AG04449 (cell line): ENCODE measurements at regions of chr10 and their contacts with region 1.

Region 1: DNA sequence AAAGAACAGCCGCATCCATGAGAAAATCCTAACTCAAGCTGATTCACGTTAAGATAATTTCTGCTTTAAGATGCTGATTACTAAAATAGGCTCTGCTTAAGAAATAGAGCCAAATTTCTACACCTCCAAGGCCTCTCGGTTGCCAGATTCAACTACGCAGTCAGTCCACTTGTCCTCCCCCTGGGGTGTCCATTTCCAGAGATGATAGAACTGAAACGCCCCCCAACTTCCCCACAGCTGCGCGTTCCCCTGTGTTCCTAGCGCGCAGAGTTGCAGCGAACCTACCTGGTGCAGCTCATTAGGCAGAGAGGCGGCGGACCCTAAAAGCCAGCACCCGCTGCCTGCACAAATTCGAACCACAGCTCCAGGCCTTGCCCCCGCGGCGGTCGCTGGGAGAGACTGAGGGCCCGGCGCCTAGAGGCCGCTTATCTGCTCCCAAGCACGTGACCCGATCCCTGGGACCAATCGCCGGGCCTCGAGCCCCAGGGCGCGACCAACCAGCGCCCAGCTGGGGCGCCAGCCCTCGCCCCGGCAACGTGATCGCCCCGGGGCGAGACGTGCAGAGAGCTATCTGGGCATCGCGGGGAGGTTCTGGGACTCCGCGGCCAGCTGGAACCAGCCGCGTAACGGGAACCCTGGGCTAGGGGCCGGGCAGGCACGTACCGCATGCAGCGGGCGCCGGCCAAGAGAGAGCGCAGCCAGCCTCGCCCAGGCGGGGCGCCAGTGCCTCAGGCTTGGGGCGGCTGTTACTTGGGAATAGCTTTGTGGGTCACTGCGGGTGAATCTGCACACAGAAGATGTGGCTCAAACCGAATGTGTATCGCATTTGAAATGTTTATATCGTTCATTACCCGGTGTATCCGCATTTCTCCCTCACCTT is at the start of gene PPP1R3C:
- DNase-seq: peak; percentile 80
- H3K4me3 ChIP-seq: peak within 1 kb of the TSS; percentile 79
- CTCF ChIP-seq: peak; percentile 68

Region 2: GRCh38 chr10:91349381-91349780 is 283.5 kb before region 1 on chr10:
- CTCF ChIA-PET with region 1: no interaction called
- POLR2A ChIA-PET with region 1: interaction called, 10 read pairs
- DNase-seq: peak; percentile 98
- H3K4me3 ChIP-seq: no peak overlapping the region
- CTCF ChIP-seq: no peak

Region 3: GRCh38 chr10:91493313-91493712 is 139.6 kb before region 1 on chr10:
- CTCF ChIA-PET with region 1: interaction called, 163 read pairs
- POLR2A ChIA-PET with region 1: interaction called, 28 read pairs
- DNase-seq: peak; percentile 16
- H3K4me3 ChIP-seq: no peak overlapping the region
- CTCF ChIP-seq: no peak

Region 4: DNA sequence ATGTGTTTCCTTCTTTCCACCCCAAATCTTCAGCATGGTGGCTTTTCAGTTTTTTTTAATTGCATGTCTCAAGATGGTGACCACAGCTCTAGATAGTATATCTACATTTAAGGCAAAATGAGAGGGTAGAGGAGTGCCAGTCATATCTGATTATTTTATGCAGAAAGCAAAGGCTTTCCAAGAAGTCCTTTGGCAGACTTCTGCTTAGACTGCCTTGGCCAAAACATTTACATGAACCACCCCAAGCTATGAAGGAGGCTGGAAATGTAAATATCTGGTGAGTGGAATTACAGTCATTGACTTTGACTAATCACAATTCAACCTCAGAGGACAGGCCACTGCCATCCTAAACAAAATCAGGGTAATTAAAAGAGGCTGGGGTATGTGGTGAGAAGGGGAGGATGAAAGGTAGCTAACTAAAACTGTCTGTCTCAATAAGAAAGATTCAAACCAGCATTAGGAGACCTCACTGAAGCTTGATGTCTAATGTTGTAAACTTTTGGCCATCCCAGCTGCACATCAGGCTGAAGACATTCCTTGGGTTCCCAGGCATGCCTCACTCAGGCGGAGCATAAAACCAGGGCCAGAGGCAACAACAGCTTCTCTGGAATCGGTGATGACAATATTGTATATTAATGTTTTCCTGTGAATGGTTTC is 53.5 kb before region 1 on chr10:
- CTCF ChIA-PET with region 1: interaction called, 5 read pairs
- POLR2A ChIA-PET with region 1: interaction called, 23 read pairs
- DNase-seq: no peak
- H3K4me3 ChIP-seq: no peak overlapping the region
- CTCF ChIP-seq: no peak

Region 5: DNA sequence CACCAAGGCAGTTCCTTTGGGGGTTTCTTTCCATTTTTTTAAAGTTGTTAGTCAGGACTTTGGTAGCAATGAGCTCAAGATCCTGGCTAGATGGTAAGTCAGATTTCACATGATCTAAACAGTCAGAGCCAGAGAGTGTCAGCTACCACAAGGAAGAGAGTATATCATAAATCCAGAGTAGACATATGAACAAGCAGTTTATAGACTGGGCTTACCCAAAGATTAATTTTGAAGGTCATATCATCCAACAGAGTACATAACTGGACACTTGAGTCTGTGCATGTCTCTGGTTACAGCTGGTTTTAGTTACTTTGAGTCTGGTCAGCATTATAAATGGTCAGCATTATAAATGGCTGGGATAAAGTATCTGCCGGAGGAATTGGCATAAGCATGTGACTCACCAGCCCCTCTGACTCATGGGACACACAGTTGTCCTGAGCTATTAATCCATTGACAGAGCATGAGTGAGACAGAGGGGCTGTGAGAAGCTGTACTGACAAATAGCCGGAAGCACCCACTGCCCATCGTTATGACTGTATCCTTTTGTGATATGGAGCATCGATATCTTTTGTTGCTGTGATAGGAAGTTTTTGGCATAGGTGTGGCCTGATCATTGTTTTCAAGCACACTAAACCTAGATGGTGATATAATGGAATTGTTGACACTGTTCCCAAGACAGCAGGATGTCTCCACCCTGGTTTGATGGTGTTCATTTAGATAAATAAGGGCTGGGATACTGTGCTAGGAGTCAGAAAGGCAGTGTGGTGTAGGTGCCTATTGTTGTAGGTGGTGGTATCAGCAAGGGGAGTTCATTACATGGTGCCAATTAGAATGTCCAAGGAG is 19.3 kb before region 1 on chr10:
- CTCF ChIA-PET with region 1: interaction called, 16 read pairs
- POLR2A ChIA-PET with region 1: interaction called, 60 read pairs
- DNase-seq: peak; percentile 96
- H3K4me3 ChIP-seq: 0 out of 2 replicates have a peak overlapping the region, but pooled peaks have one; percentile 15
- CTCF ChIP-seq: no peak

Region 6: DNA sequence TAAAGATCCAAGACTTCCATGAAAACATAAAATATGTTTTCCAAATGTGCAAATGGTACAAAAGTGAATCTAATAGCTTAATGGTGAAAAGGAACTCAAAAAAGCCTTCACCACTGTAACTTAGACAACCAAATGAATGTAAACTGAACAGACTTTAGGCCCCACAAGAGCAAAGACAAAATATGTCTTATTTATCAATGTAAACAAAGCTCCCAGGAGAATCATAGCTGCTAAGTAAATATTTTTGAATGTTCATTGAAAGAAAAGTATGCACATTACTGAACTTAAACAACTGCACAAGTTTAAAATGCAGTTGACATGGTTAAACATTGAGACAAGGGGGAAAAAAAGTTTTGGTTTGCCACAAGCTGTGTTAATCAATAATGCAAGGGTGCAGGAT is 27.0 kb after region 1 on chr10:
- CTCF ChIA-PET with region 1: interaction called, 11 read pairs
- POLR2A ChIA-PET with region 1: interaction called, 7 read pairs
- DNase-seq: no peak
- H3K4me3 ChIP-seq: no peak overlapping the region
- CTCF ChIP-seq: no peak

Region 7: GRCh38 chr10:91779011-91779605 is 146.2 kb after region 1 on chr10:
- CTCF ChIA-PET with region 1: no interaction called
- POLR2A ChIA-PET with region 1: no interaction called
- DNase-seq: no peak
- H3K4me3 ChIP-seq: no peak overlapping the region
- CTCF ChIP-seq: no peak